ENCODE measurements at regions of chr18 and their contacts with region 1.

Region 1: GRCh38 chr18:72530622-72531021 is 13.5 kb downstream of the CBLN2 start:
- DNase-seq: peak; percentile 69
- H3K4me3 ChIP-seq: no peak overlapping the region
- H3K27ac ChIP-seq: no peak overlapping the region
- H3K4me1 ChIP-seq: peaks cover 8% of the 10 kb centered on the region
- H3K27me3 ChIP-seq: no peaks in the 10 kb centered on the region
- CTCF ChIP-seq: peak; percentile 51

Region 2: DNA sequence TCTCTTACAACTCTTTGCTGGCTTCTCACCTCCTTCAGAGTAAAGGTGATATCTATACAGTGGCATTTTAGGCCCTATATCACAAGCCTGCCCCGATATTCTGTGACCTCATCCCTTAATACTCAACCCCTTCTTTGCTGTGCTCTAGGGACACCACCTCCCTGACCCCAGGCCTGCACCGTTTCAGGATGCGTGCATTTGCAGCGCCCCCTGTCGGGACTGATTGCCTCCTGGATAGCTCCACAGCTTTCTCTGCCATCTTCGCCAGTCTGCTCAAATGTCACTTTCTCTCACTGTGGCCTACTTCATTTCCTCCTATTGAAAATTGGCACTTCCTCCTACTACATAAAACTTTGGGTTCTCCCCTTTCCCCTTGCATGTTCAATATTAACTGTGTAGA is 1952.1 kb before region 1 on chr18:
- CTCF ChIA-PET with region 1: no interaction called
- POLR2A ChIA-PET with region 1: interaction called, 10 read pairs
- intact Hi-C with region 1: no loop called
- DNase-seq: peak; percentile 32
- H3K4me3 ChIP-seq: no peak overlapping the region
- H3K27ac ChIP-seq: no peak overlapping the region
- H3K4me1 ChIP-seq: peaks cover 30% of the 10 kb centered on the region
- H3K27me3 ChIP-seq: no peaks in the 10 kb centered on the region
- CTCF ChIP-seq: peak; percentile 51

Region 3: GRCh38 chr18:72283148-72283925 is 247.3 kb before region 1 on chr18:
- CTCF ChIA-PET with region 1: no interaction called
- POLR2A ChIA-PET with region 1: no interaction called
- intact Hi-C with region 1: no loop called
- DNase-seq: no peak
- H3K4me3 ChIP-seq: no peak overlapping the region
- H3K27ac ChIP-seq: no peak overlapping the region
- H3K4me1 ChIP-seq: no peaks in the 10 kb centered on the region
- H3K27me3 ChIP-seq: no peaks in the 10 kb centered on the region
- CTCF ChIP-seq: no peak

Region 4: GRCh38 chr18:72502671-72503431 is 27.8 kb before region 1 on chr18:
- CTCF ChIA-PET with region 1: no interaction called
- POLR2A ChIA-PET with region 1: no interaction called
- intact Hi-C with region 1: no loop called
- DNase-seq: no peak
- H3K4me3 ChIP-seq: no peak overlapping the region
- H3K27ac ChIP-seq: no peak overlapping the region
- H3K4me1 ChIP-seq: no peaks in the 10 kb centered on the region
- H3K27me3 ChIP-seq: no peaks in the 10 kb centered on the region
- CTCF ChIP-seq: no peak

Region 5: GRCh38 chr18:72555101-72555500 is 24.5 kb after region 1 on chr18:
- CTCF ChIA-PET with region 1: no interaction called
- POLR2A ChIA-PET with region 1: no interaction called
- intact Hi-C with region 1: no loop called
- DNase-seq: no peak
- H3K4me3 ChIP-seq: no peak overlapping the region
- H3K27ac ChIP-seq: no peak overlapping the region
- H3K4me1 ChIP-seq: no peaks in the 10 kb centered on the region
- H3K27me3 ChIP-seq: no peaks in the 10 kb centered on the region
- CTCF ChIP-seq: no peak

Measured in A673 (cell line).